Heart left ventricle (tissue), 16 donors: ENCODE measurements at regions of chr15 and their contacts with region 1.

Region 1: GRCh38 chr15:51547656-51548055 is 74.9 kb downstream of the DMXL2 start:
- DNase-seq: no peak
- ATAC-seq: no peak
- H3K4me3 ChIP-seq: no peak overlapping the region
- H3K27ac ChIP-seq: no peak overlapping the region
- H3K4me1 ChIP-seq: no peaks in the 10 kb centered on the region
- H3K27me3 ChIP-seq: no peaks in the 10 kb centered on the region
- CTCF ChIP-seq: no peak
- POLR2A ChIP-seq: no peak

Region 2: DNA sequence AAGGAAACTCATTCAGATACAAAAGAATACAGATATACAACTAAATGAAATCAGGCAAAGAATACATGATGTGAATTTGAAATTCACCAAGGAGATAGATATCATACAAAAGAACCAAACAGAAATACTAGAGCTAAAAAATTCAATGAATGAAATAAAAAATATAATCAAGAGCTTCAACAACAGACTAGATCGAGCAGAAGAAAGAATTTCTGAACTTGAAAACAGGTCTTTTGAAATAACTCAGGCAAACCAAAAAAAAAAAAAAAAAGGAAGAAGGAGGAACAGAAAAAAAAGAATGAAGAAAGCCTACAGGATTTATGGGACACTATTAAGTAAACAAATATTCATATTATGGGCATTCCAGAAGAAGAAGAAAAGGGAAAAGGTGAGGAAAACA is 62.9 kb before region 1 on chr15:
- intact Hi-C with region 1: no loop called
- DNase-seq: no peak
- ATAC-seq: no peak
- H3K4me3 ChIP-seq: no peak overlapping the region
- H3K27ac ChIP-seq: no peak overlapping the region
- H3K4me1 ChIP-seq: no peaks in the 10 kb centered on the region
- H3K27me3 ChIP-seq: no peaks in the 10 kb centered on the region
- CTCF ChIP-seq: no peak
- POLR2A ChIP-seq: no peak

Region 3: DNA sequence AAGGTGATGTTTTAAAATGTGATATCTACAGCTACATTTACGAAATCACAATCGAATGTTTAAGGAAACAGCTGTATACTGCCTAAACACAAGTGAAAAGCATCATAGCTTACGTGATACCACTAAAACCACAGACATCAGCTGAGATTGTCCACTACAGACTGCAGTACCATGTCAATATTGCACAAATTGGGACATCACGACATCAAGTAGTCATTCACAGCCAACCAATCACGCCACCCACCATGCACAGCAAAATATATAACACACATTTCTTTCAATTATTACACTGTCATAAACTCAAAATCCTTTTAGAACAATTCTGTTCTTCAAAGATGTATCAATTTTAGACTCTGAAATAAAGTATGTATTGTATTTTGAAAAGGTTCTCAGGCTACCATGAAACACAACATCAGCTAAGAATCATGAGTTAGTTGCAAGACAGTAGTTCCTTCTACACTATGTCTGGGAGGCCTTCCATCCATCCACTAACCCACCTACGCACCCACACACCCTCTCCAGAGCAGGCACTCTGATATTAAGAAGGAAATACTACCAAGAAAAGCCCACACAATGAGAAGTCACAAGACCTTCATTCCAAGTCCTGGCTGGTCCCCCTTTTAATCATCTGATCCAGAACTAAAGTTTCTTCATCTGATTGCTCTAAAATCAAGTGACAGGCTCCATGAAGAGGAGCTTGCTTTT is 71.8 kb after region 1 on chr15:
- intact Hi-C with region 1: loop called in 1 of 10 experiments (anchors 10 kb)
- DNase-seq: no peak
- ATAC-seq: no peak
- H3K4me3 ChIP-seq: peak overlapping the region in 1 of 12 donors; percentile 85
- H3K27ac ChIP-seq: peak overlapping the region in 1 of 12 donors; percentile 96
- H3K4me1 ChIP-seq: peaks cover 0 to 72% (median 10%) of the 10 kb centered on the region in 12 donors
- H3K27me3 ChIP-seq: no peaks in the 10 kb centered on the region
- CTCF ChIP-seq: no peak
- POLR2A ChIP-seq: no peak